ENCODE measurements at regions of chrX and their contacts with region 1.

Region 1: DNA sequence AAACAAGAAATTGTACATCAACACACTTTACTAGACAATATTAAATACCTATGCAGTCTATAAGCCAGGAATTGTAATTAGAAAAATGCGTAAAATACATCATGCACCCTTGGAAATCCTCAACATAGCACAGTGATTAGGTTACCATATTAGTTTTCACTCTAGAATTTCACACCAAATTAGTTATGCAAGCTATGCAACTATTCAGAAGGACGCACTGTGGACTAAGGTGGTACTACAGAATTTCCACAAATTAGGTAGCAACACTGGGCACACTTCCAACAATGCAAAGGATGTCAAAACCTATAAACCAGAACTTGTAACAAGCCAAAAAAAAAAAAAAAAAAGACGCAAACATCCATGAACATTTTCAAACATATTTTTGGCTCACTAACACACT is 71.1 kb upstream of the ZCCHC13 start:
- DNase-seq: peak in 2 of 9 donors; percentile 2 to 6
- ATAC-seq: no peak
- H3K4me3 ChIP-seq: no peak overlapping the region
- H3K4me3 Mint-ChIP-seq: no peak overlapping the region
- H3K27ac ChIP-seq: no peak overlapping the region
- H3K27ac Mint-ChIP-seq: no peak overlapping the region
- H3K4me1 ChIP-seq: no peaks in the 10 kb centered on the region
- H3K4me1 Mint-ChIP-seq: peaks cover 0 to 12% (median 4%) of the 10 kb centered on the region in 7 donors
- H3K27me3 ChIP-seq: no peaks in the 10 kb centered on the region
- H3K27me3 Mint-ChIP-seq: no peaks in the 10 kb centered on the region

Region 2: DNA sequence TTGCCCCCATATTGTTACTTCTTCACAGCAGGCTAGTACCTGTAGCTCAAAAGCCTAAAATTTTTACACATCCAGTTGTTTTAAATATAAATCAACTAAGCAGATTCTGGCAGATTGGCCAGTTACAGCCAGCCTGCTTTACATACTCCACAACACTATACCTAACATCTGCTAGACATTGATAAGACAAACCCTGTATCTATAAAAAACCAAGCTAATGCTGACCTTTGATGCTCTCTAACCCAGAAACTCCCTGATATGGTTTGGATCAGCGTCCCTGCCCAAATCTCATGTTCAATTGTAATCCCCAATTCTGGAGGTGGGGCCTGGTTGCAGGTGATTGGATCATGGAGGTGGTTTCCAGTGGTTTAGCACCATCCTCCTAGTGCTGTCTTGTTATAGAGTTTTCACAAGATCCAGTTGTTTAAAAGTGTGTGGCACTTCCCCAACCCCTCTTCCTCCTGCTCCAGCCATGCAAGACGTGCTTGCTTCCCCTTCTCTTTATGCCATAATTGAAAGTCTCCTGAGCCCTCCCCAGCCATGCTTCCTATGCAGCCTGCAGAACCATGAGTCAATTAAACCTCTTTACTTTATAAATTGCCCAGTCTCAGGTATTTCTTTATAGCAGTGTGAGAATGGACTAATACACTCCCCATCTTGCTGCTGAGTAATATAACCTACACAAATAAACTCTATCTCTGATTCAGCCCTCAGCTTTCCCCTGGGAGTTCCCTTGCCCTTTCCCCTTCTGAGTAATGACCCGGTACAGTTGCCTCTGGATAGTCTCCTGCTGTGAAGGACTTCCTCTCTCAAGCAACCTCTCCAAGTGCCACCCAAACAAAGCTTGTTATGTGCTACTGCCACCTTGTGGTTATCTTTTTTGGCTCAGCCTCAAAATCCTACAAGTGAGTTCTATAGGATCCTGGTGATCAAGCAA is 110.8 kb after region 1 on chrX:
- CTCF ChIA-PET with region 1: no interaction called
- POLR2A ChIA-PET with region 1: no interaction called
- intact Hi-C with region 1: loop called in 1 of 2 experiments (anchors 10 kb)
- DNase-seq: peak in 8 of 9 donors; percentile 17 to 59 (median 44)
- ATAC-seq: peak; percentile 82
- H3K4me3 ChIP-seq: no peak overlapping the region
- H3K4me3 Mint-ChIP-seq: no peak overlapping the region
- H3K27ac ChIP-seq: no peak overlapping the region
- H3K27ac Mint-ChIP-seq: peak overlapping the region in 1 of 9 donors; percentile 37
- H3K4me1 ChIP-seq: no peaks in the 10 kb centered on the region
- H3K4me1 Mint-ChIP-seq: peaks cover 0 to 5% (median 3%) of the 10 kb centered on the region in 7 donors
- H3K27me3 ChIP-seq: no peaks in the 10 kb centered on the region
- H3K27me3 Mint-ChIP-seq: peaks cover 0 to 4% (median 4%) of the 10 kb centered on the region in 5 donors

Measured in naive thymus-derived CD4-positive, alpha-beta T cell (primary cell).